GM12878 (cell line): ENCODE measurements at regions of chr1 and their contacts with region 1.

Region 1: GRCh38 chr1:219812491-219813203 is 115.7 kb downstream of the SLC30A10 start:
- DNase-seq: no peak
- ATAC-seq: peak; percentile 96
- H3K4me3 ChIP-seq: no peak overlapping the region
- H3K27ac ChIP-seq: no peak overlapping the region
- H3K4me1 ChIP-seq: no peaks in the 10 kb centered on the region
- H3K27me3 ChIP-seq: peaks cover 0 to 4% of the 10 kb centered on the region in 2 experiments; a peak in 3 of 4 replicates
- CTCF ChIP-seq: peak; percentile 77 to 79 (median 79)
- EP300 ChIP-seq: no peak
- POLR2A ChIP-seq: no peak
- RAD21 ChIP-seq: peak; percentile 89

Region 2: DNA sequence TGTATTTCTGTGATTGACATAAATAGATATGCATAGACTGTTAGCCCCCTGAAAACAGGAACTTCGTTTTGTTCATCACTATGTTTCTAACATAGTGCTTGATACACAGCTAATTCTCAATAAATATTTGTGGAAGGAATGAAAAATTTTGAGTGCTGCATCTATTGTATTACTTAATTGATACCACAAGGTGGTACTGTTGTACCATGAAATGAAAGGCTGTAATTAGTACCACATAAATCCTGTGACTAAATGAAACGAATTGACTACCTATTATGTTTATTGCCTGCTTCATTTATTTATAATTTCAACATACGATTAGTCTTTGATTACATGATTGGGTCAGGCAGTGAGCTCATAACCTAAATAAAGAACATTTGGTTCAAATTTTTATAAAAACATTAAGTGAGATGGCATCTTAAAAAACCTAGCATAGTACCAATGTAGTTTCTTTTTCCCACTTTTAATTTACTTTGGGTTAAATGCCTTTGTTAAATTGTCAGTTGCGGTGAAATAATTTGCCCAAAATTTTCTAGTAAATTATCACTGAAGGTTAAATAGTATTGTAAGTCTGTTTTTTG is 1482.5 kb before region 1 on chr1:
- CTCF ChIA-PET with region 1: interaction called, 7 read pairs
- POLR2A ChIA-PET with region 1: no interaction called
- RAD21 ChIA-PET with region 1: no interaction called
- SMC1A ChIA-PET with region 1: no interaction called
- in situ Hi-C with region 1: no loop called
- intact Hi-C with region 1: loop called (anchors 1 kb)
- DNase-seq: no peak
- ATAC-seq: peak; percentile 76
- H3K4me3 ChIP-seq: no peak overlapping the region
- H3K27ac ChIP-seq: no peak overlapping the region
- H3K4me1 ChIP-seq: no peaks in the 10 kb centered on the region
- H3K27me3 ChIP-seq: no peaks in the 10 kb centered on the region
- CTCF ChIP-seq: peak; percentile 36 to 69 (median 39); a peak in 5 of 6 replicates
- EP300 ChIP-seq: no peak
- POLR2A ChIP-seq: no peak
- RAD21 ChIP-seq: peak; percentile 71

Region 3: DNA sequence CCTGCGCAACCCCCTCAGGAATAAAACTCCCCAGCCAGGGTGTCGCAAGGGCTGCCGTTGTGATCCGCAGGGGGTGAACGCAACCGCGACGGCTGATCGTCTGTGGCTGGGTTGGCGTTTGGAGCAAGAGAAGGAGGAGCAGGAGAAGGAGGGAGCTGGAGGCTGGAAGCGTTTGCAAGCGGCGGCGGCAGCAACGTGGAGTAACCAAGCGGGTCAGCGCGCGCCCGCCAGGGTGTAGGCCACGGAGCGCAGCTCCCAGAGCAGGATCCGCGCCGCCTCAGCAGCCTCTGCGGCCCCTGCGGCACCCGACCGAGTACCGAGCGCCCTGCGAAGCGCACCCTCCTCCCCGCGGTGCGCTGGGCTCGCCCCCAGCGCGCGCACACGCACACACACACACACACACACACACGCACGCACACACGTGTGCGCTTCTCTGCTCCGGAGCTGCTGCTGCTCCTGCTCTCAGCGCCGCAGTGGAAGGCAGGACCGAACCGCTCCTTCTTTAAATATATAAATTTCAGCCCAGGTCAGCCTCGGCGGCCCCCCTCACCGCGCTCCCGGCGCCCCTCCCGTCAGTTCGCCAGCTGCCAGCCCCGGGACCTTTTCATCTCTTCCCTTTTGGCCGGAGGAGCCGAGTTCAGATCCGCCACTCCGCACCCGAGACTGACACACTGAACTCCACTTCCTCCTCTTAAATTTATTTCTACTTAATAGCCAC is 1466.8 kb before region 1 on chr1:
- CTCF ChIA-PET with region 1: no interaction called
- POLR2A ChIA-PET with region 1: no interaction called
- RAD21 ChIA-PET with region 1: no interaction called
- SMC1A ChIA-PET with region 1: no interaction called
- in situ Hi-C with region 1: loop called (anchors 10 kb)
- intact Hi-C with region 1: no loop called
- DNase-seq: no peak
- ATAC-seq: peak; percentile 90
- H3K4me3 ChIP-seq: peak overlapping the region; percentile 67
- H3K27ac ChIP-seq: no peak overlapping the region
- H3K4me1 ChIP-seq: peaks cover 4% of the 10 kb centered on the region
- H3K27me3 ChIP-seq: peaks cover 3 to 21% of the 10 kb centered on the region in 2 experiments
- CTCF ChIP-seq: no peak
- EP300 ChIP-seq: no peak
- POLR2A ChIP-seq: no peak
- RAD21 ChIP-seq: no peak

Region 4: GRCh38 chr1:219576931-219577730 is 235.5 kb before region 1 on chr1:
- CTCF ChIA-PET with region 1: no interaction called
- POLR2A ChIA-PET with region 1: no interaction called
- RAD21 ChIA-PET with region 1: no interaction called
- SMC1A ChIA-PET with region 1: no interaction called
- in situ Hi-C with region 1: no loop called
- intact Hi-C with region 1: loop called (anchors 5 kb)
- DNase-seq: no peak
- ATAC-seq: no peak
- H3K4me3 ChIP-seq: no peak overlapping the region
- H3K27ac ChIP-seq: no peak overlapping the region
- H3K4me1 ChIP-seq: peaks cover 13% of the 10 kb centered on the region
- H3K27me3 ChIP-seq: no peaks in the 10 kb centered on the region
- CTCF ChIP-seq: no peak
- EP300 ChIP-seq: no peak
- POLR2A ChIP-seq: no peak
- RAD21 ChIP-seq: no peak

Region 5: DNA sequence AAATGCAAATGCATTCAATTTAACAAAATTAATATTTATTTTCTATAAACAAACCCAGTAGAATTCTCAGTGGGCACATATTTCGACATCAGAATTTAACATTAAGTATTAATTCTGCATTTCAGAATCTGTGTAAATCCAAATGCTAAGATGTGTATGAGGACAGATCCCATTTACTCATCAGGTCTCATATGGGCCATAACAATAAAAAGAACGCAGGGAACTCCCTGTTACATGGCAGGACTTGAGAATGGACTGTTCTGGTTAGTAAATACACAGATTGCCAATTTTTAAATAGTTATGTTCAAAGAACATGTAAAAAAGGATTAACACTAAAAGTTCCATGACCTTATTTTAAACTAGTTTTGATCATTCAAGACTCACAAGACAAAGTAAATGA is 11.7 kb after region 1 on chr1:
- CTCF ChIA-PET with region 1: interaction called, 10 read pairs
- POLR2A ChIA-PET with region 1: no interaction called
- RAD21 ChIA-PET with region 1: interaction called, 3 read pairs
- SMC1A ChIA-PET with region 1: no interaction called
- in situ Hi-C with region 1: no loop called
- intact Hi-C with region 1: no loop called
- DNase-seq: no peak
- ATAC-seq: no peak
- H3K4me3 ChIP-seq: no peak overlapping the region
- H3K27ac ChIP-seq: no peak overlapping the region
- H3K4me1 ChIP-seq: no peaks in the 10 kb centered on the region
- H3K27me3 ChIP-seq: no peaks in the 10 kb centered on the region
- CTCF ChIP-seq: no peak
- EP300 ChIP-seq: no peak
- POLR2A ChIP-seq: no peak
- RAD21 ChIP-seq: no peak